Activated CD4-positive, alpha-beta T cell treated with anti-CD3 and anti-CD28 coated beads for 36 hours (primary cell): ENCODE measurements at regions of chr3 and their contacts with region 1.

Region 1: GRCh38 chr3:14651440-14652251 is at the start of gene CCDC174:
- DNase-seq: peak; percentile 95
- ATAC-seq: peak; percentile 99
- H3K4me3 Mint-ChIP-seq: peak within 1 kb of the TSS; percentile 93
- H3K27ac Mint-ChIP-seq: peak within 1 kb of the TSS; percentile 96
- H3K4me1 Mint-ChIP-seq: peaks cover 40% of the 10 kb centered on the region
- H3K27me3 Mint-ChIP-seq: no peaks in the 10 kb centered on the region
- total RNA-seq, gene CCDC174: 16.2 to 18.2 TPM

Region 2: DNA sequence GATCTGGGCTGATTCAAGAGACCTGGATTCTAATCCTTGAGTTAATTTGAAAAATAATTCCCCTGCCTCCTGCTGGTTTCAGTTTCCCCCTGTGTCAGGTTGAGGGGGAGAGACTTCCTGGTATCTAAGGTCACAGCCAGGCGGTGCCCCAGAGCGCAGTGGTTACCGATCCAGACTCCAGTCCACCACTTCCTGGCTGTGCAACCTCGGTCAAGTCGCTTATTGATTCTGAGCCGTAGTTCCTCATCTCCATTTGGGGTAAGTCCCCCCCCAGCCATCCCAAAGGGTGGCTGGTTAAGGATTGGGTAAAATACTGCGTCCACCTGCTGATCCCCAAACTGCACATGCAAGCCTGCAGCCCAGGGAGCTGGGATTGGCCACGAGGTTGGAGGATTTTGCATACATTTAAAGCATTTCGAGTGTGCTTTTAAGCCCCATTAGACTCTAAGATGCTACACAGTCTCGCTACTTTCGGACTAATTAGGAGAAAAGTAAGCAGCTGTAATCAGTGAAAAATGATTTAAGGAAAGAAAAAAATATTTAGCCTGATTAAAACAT is 225.5 kb before region 1 on chr3:
- CTCF ChIA-PET with region 1: no interaction called
- POLR2A ChIA-PET with region 1: no interaction called
- intact Hi-C with region 1: loop called in 1 of 2 experiments (anchors 10 kb)
- DNase-seq: peak; percentile 66
- ATAC-seq: peak; percentile 45
- H3K4me3 Mint-ChIP-seq: peak overlapping the region; percentile 0
- H3K27ac Mint-ChIP-seq: peak overlapping the region; percentile 79
- H3K4me1 Mint-ChIP-seq: peaks cover 91% of the 10 kb centered on the region
- H3K27me3 Mint-ChIP-seq: no peaks in the 10 kb centered on the region

Region 3: GRCh38 chr3:15064835-15065549 is 413.3 kb after region 1 on chr3 and contains the start of gene MRPS25:
- CTCF ChIA-PET with region 1: no interaction called
- POLR2A ChIA-PET with region 1: no interaction called
- intact Hi-C with region 1: loop called in 1 of 2 experiments (anchors 1 kb)
- DNase-seq: peak; percentile 95
- ATAC-seq: peak; percentile 98
- H3K4me3 Mint-ChIP-seq: peak within 1 kb of the TSS; percentile 96
- H3K27ac Mint-ChIP-seq: peak within 1 kb of the TSS; percentile 96
- H3K4me1 Mint-ChIP-seq: peaks cover 22% of the 10 kb centered on the region
- H3K27me3 Mint-ChIP-seq: no peaks in the 10 kb centered on the region
- total RNA-seq, gene MRPS25: 52.3 to 67.0 TPM

Region 4: GRCh38 chr3:16290007-16290826 is 1638.6 kb after region 1 on chr3:
- CTCF ChIA-PET with region 1: no interaction called
- POLR2A ChIA-PET with region 1: no interaction called
- intact Hi-C with region 1: no loop called
- DNase-seq: peak; percentile 79
- ATAC-seq: no peak
- H3K4me3 Mint-ChIP-seq: peak overlapping the region; percentile 79
- H3K27ac Mint-ChIP-seq: peak overlapping the region; percentile 94
- H3K4me1 Mint-ChIP-seq: peaks cover 94% of the 10 kb centered on the region
- H3K27me3 Mint-ChIP-seq: no peaks in the 10 kb centered on the region